ENCODE measurements at regions of chr16 and their contacts with region 1.

Region 1: GRCh38 chr16:86570558-86571529 is 4.2 kb downstream of the FOXC2 start:
- DNase-seq: no peak
- ATAC-seq: no peak
- H3K4me3 ChIP-seq: peak overlapping the region; percentile 85 to 98
- H3K27ac ChIP-seq: peak overlapping the region; percentile 90 to 92
- H3K4me1 ChIP-seq: no peaks in the 10 kb centered on the region
- H3K27me3 ChIP-seq: no peaks in the 10 kb centered on the region

Region 2: GRCh38 chr16:86740906-86741799 is 170.3 kb after region 1 on chr16:
- intact Hi-C with region 1: loop called in 1 of 2 experiments (anchors 5 kb)
- DNase-seq: peak; percentile 83 to 90
- ATAC-seq: peak; percentile 93
- H3K4me3 ChIP-seq: no peak overlapping the region
- H3K27ac ChIP-seq: peak overlapping the region; percentile 99
- H3K4me1 ChIP-seq: no peaks in the 10 kb centered on the region
- H3K27me3 ChIP-seq: no peaks in the 10 kb centered on the region